ENCODE measurements at regions of chr13 and their contacts with region 1.

Region 1: DNA sequence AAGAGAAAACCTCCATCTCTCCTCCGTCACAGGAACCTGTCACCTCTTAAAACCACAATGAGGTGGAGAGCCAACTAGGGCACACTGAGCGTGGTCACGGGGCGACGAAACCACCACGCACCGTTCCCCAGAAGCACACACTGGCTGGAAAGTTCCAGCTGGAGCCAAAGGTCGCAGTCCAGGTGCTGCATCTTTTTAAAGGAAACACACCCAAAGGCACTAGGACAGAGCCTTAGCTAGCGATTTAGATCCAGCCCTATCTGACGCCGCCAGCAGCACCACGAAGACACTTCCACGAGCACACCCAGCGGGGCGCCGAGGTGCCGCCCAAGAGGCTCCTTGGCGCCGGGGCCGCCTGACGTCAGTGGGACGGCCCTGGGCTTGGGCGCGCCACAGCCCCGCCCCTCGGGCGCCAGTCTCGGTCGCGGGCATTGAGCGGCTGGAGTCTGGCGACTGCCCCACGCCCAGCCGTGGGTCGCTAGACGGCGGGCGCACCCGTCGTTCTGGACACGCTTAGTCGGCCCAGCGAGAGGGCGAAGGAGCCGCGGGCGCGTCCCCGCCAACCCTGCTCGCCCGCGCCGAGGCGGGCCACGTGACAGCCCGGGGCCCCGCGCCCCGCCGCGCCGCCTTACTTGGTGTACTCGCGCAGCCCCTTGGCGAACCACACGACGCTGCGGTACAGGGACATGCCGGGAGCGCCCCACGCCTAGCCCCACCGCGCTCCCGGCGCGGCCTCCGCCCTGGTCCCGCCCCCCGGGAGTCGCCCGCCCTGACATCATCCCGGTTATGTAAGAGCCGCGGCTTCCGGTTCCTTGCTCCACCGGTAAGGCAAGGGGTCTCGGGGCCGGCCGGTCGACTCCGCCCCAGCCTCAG is at the start of gene DHRS12:
- DNase-seq: peak; percentile 92
- H3K4me3 ChIP-seq: peak within 1 kb of the TSS; percentile 84
- H3K27ac ChIP-seq: peak within 1 kb of the TSS; percentile 67
- H3K4me1 ChIP-seq: peaks cover 75% of the 10 kb centered on the region
- CTCF ChIP-seq: peak; percentile 41; the same call in 1 of the 2 replicates
- total RNA-seq, gene DHRS12: 3.4 and 3.5 TPM in 2 replicates

Region 2: DNA sequence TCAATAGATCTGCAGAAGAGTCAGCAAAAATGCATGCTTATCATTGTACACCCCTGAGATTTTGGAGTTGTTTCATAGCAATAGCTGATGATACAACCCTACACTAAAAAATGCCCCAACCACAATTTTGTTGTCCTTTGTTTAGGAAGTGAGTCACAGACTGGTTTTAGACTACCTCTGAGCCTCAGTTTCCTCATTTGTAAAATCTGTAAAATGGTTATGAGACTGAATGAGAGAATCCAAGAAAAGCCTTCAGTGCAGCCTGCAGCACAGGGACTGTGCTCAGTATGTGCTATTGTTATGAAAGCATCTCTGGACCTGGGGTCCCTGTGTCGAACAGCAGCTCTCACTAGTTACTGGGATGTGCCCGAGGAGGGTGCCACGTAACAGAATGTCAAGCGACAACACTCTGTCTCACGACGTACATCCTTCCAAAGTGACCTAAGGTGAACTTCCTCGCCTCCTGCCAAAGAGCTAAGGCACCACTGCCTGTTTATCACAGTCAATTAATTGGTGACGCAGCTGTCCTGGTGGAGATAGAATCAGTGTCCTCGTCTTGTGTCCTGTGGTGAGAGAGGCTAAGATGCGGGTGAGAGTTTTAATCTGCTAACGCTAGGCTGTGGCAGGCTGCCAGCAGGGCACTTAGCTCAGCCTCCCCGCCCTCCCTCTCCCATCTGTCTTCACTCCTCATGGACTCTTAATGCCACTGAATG is 17.8 kb before region 1 on chr13:
- CTCF ChIA-PET with region 1: no interaction called
- POLR2A ChIA-PET with region 1: no interaction called
- intact Hi-C with region 1: no loop called
- DNase-seq: no peak
- H3K4me3 ChIP-seq: no peak overlapping the region
- H3K27ac ChIP-seq: no peak overlapping the region
- H3K4me1 ChIP-seq: peaks cover 11% of the 10 kb centered on the region
- CTCF ChIP-seq: no peak

Region 3: DNA sequence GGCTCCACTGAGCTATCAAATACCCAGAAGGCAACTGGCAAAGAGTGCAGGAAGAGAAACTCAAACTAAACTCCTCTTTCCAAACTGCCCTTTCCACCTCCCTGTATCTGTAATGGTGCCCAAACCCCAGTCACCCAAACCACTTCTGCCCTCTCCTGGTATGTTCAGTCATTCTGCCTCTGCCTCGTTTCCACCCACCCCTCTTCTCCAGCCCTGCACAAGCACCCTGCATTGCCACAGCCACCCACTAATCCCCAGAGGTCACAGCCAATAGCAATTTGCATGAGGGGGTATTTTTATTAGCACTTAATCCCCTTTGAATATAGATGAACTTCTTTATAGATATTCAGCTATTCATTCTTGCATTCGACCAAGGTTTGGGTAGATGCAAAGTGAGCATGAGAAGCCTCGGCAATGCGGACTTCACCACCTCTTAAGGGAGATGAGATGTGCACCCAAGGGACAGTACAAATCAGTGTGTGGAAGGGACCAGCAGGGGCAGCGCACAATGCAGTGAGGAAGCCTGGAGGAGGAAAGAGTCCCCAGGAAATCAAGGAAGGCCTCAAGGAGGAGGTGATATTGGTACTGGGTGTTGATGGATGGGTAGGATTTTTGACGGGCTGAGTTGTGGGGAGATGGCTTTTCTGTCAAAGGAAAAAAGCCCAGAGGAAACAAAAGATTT is 29.0 kb after region 1 on chr13:
- CTCF ChIA-PET with region 1: interaction called, 5 read pairs
- POLR2A ChIA-PET with region 1: interaction called, 14 read pairs
- intact Hi-C with region 1: no loop called
- DNase-seq: peak; percentile 83
- H3K4me3 ChIP-seq: peak overlapping the region; percentile 41
- H3K27ac ChIP-seq: peak overlapping the region; percentile 95
- H3K4me1 ChIP-seq: peaks cover 76% of the 10 kb centered on the region
- CTCF ChIP-seq: peak; percentile 88

Region 4: DNA sequence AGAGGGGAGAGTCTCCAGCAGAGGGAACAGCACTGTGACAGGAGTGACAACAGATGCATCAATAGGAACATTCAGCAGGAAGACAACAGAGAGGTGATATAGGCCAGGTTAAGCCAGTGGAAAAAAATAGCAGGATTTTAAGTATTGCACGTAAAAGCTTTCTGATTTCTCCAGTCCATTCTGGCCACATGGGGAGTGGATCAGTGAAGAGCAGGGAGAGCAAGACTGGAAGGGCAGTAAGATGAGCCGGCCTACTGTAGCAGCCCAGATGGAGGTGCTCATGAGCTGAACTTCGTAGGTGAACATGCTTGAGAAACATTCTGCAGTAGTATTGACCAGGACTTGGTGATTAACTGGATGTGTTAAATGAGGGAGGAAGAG is 222.6 kb after region 1 on chr13:
- CTCF ChIA-PET with region 1: no interaction called
- POLR2A ChIA-PET with region 1: no interaction called
- intact Hi-C with region 1: no loop called
- DNase-seq: no peak
- H3K4me3 ChIP-seq: no peak overlapping the region
- H3K27ac ChIP-seq: no peak overlapping the region
- H3K4me1 ChIP-seq: no peaks in the 10 kb centered on the region
- CTCF ChIP-seq: 0 out of 2 replicates have a peak, but pooled peaks have one; percentile 25